Panc1 (cell line): ENCODE measurements at regions of chr14 and their contacts with region 1.

Region 1: GRCh38 chr14:77151918-77152588 is 10.5 kb upstream of the ZDHHC22 start:
- DNase-seq: peak; percentile 24
- ATAC-seq: peak; percentile 83
- H3K4me3 ChIP-seq: no peak overlapping the region
- H3K27ac ChIP-seq: no peak overlapping the region
- H3K4me1 ChIP-seq: no peaks in the 10 kb centered on the region
- H3K27me3 ChIP-seq: peaks cover 3% of the 10 kb centered on the region; the same call in 1 of the 2 replicates
- CTCF ChIP-seq: no peak; the same call in 1 of the 2 replicates

Region 2: GRCh38 chr14:77212943-77213678 is 61.1 kb after region 1 on chr14:
- CTCF ChIA-PET with region 1: interaction called, 8 read pairs
- POLR2A ChIA-PET with region 1: no interaction called
- in situ Hi-C with region 1: no loop called
- intact Hi-C with region 1: loop called (anchors 2 kb)
- DNase-seq: peak; percentile 25
- ATAC-seq: peak; percentile 91
- H3K4me3 ChIP-seq: no peak overlapping the region
- H3K27ac ChIP-seq: no peak overlapping the region
- H3K4me1 ChIP-seq: no peaks in the 10 kb centered on the region
- H3K27me3 ChIP-seq: peaks cover 2% of the 10 kb centered on the region; the same call in 1 of the 2 replicates
- CTCF ChIP-seq: peak; percentile 86

Region 3: GRCh38 chr14:77301103-77301502 is 149.1 kb after region 1 on chr14:
- CTCF ChIA-PET with region 1: interaction called, 4 read pairs
- POLR2A ChIA-PET with region 1: no interaction called
- in situ Hi-C with region 1: no loop called
- intact Hi-C with region 1: loop called (anchors 5 kb)
- DNase-seq: peak; percentile 69
- ATAC-seq: peak; percentile 73
- H3K4me3 ChIP-seq: no peak overlapping the region
- H3K27ac ChIP-seq: no peak overlapping the region
- H3K4me1 ChIP-seq: peaks cover 19% of the 10 kb centered on the region
- H3K27me3 ChIP-seq: no peaks in the 10 kb centered on the region
- CTCF ChIP-seq: peak; percentile 81